Naive thymus-derived CD4-positive, alpha-beta T cell (primary cell): ENCODE measurements at regions of chr12 and their contacts with region 1.

Region 1: DNA sequence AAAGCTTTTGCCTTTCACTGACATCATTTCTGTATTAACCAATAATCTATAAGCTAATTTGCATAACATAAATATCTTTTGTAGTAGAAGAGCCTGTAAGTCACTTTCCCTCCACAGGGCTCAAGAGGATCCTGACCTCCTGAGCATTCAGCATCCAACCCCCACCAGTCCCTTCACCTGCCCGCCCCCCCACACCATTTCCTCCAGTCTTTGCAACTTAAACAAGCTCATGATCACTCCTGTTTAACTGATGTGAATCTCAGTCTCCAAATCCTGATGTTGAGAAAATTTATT is 12.0 kb upstream of the CRY1 start:
- DNase-seq: no peak
- ATAC-seq: no peak
- H3K4me3 ChIP-seq: no peak overlapping the region
- H3K4me3 Mint-ChIP-seq: no peak overlapping the region
- H3K27ac ChIP-seq: no peak overlapping the region
- H3K27ac Mint-ChIP-seq: no peak overlapping the region
- H3K4me1 ChIP-seq: no peaks in the 10 kb centered on the region
- H3K4me1 Mint-ChIP-seq: peaks cover 0 to 3% (median 0%) of the 10 kb centered on the region in 7 donors
- H3K27me3 ChIP-seq: no peaks in the 10 kb centered on the region
- H3K27me3 Mint-ChIP-seq: peaks cover 0 to 17% (median 0%) of the 10 kb centered on the region in 5 donors

Region 2: DNA sequence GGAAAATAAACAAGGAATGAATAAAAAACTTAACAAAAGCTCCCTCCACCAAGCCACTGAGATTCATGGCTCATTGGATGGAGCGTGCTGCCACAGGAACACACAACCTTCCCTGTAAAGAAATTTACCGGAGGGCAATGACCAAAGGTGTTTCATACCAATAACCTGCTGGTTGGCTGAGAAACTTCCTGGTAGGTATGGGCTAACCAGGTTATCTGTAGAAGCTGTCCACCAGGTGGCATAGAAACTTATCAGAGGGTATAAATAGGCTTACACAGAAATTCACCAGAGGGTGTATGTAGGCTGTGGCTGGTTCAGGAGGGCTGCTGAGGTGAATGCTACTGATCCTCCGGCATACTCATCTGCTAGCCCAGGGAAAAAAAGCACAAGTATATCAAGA is 91.3 kb before region 1 on chr12:
- CTCF ChIA-PET with region 1: no interaction called
- POLR2A ChIA-PET with region 1: no interaction called
- intact Hi-C with region 1: loop called in 1 of 2 experiments (anchors 1 kb)
- DNase-seq: no peak
- ATAC-seq: peak; percentile 57
- H3K4me3 ChIP-seq: no peak overlapping the region
- H3K4me3 Mint-ChIP-seq: no peak overlapping the region
- H3K27ac ChIP-seq: no peak overlapping the region
- H3K27ac Mint-ChIP-seq: no peak overlapping the region
- H3K4me1 ChIP-seq: no peaks in the 10 kb centered on the region
- H3K4me1 Mint-ChIP-seq: peaks cover 0 to 1% (median 0%) of the 10 kb centered on the region in 7 donors
- H3K27me3 ChIP-seq: no peaks in the 10 kb centered on the region
- H3K27me3 Mint-ChIP-seq: no peaks in the 10 kb centered on the region

Region 3: GRCh38 chr12:107079172-107080011 is 26.0 kb before region 1 on chr12:
- CTCF ChIA-PET with region 1: interaction called, 8 read pairs
- POLR2A ChIA-PET with region 1: no interaction called
- intact Hi-C with region 1: loop called in 1 of 2 experiments (anchors 1 kb)
- DNase-seq: peak in 4 of 9 donors; percentile 19 to 24 (median 22)
- ATAC-seq: peak; percentile 56
- H3K4me3 ChIP-seq: no peak overlapping the region
- H3K4me3 Mint-ChIP-seq: no peak overlapping the region
- H3K27ac ChIP-seq: no peak overlapping the region
- H3K27ac Mint-ChIP-seq: no peak overlapping the region
- H3K4me1 ChIP-seq: no peaks in the 10 kb centered on the region
- H3K4me1 Mint-ChIP-seq: peaks cover 0 to 40% (median 18%) of the 10 kb centered on the region in 7 donors
- H3K27me3 ChIP-seq: no peaks in the 10 kb centered on the region
- H3K27me3 Mint-ChIP-seq: peaks cover 0 to 3% (median 0%) of the 10 kb centered on the region in 5 donors